Mammary epithelial cell (primary cell): ENCODE measurements at regions of chr5 and their contacts with region 1.

Region 1: GRCh38 chr5:170836226-170836625 is 25.6 kb upstream of the RANBP17 start:
- DNase-seq: no peak
- H3K4me3 ChIP-seq: no peak overlapping the region
- H3K27ac ChIP-seq: no peak overlapping the region
- H3K4me1 ChIP-seq: no peaks in the 10 kb centered on the region
- H3K27me3 ChIP-seq: no peaks in the 10 kb centered on the region
- CTCF ChIP-seq: no peak

Region 2: DNA sequence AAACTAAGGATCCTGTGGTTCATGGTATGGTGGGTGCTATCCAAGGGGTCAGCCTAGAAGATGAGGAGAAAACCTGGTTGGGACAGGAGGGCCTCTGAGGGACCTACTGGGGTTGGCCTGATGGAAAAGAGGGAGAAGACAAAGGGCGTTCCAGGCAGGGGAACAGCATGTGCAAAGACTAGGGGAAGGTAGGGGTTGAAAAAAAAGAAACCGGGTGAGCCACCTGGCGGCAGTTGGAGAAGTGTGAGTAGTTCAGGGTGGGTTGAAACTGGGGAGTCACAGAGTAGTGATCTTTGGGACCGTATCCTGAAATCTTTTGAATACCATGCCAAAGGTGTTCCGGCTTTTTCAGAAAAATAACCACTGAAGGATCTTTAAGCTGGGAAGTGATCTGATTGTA is 61.4 kb before region 1 on chr5:
- CTCF ChIA-PET with region 1: no interaction called
- dilution Hi-C with region 1: loop called (anchors 5 kb)
- in situ Hi-C with region 1: no loop called
- intact Hi-C with region 1: no loop called
- DNase-seq: no peak
- H3K4me3 ChIP-seq: no peak overlapping the region
- H3K27ac ChIP-seq: no peak overlapping the region
- H3K4me1 ChIP-seq: no peaks in the 10 kb centered on the region
- H3K27me3 ChIP-seq: no peaks in the 10 kb centered on the region
- CTCF ChIP-seq: no peak

Region 3: DNA sequence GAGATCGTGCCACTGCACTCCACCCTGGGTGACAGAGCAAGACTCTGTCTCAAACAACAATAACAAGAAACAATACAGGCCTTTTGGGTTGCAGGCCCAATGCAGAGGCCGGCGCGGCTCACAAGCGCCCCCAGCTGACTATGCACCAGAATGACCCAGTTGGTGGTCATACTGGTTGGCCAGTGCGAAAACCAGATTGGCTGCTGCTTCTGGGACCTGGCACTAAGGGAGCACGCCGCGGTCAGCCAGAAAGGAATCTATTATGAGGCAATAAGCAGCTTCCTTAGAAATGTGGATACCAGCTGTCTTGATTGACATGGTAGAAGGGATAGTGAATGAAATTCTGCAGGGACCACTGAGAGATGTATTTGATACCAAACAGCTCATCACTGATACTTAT is 60.6 kb after region 1 on chr5:
- CTCF ChIA-PET with region 1: no interaction called
- dilution Hi-C with region 1: no loop called
- in situ Hi-C with region 1: no loop called
- intact Hi-C with region 1: no loop called
- DNase-seq: no peak
- H3K4me3 ChIP-seq: no peak overlapping the region
- H3K27ac ChIP-seq: no peak overlapping the region
- H3K4me1 ChIP-seq: no peaks in the 10 kb centered on the region
- H3K27me3 ChIP-seq: no peaks in the 10 kb centered on the region
- CTCF ChIP-seq: no peak

Region 4: GRCh38 chr5:170907758-170908157 is 71.5 kb after region 1 on chr5:
- CTCF ChIA-PET with region 1: no interaction called
- dilution Hi-C with region 1: no loop called
- in situ Hi-C with region 1: no loop called
- intact Hi-C with region 1: no loop called
- DNase-seq: peak; percentile 59
- H3K4me3 ChIP-seq: no peak overlapping the region
- H3K27ac ChIP-seq: no peak overlapping the region
- H3K4me1 ChIP-seq: no peaks in the 10 kb centered on the region
- H3K27me3 ChIP-seq: no peaks in the 10 kb centered on the region
- CTCF ChIP-seq: no peak

Region 5: GRCh38 chr5:171776770-171777759 is 940.8 kb after region 1 on chr5:
- CTCF ChIA-PET with region 1: no interaction called
- dilution Hi-C with region 1: no loop called
- in situ Hi-C with region 1: no loop called
- intact Hi-C with region 1: no loop called
- DNase-seq: peak; percentile 39
- H3K4me3 ChIP-seq: no peak overlapping the region
- H3K27ac ChIP-seq: no peak overlapping the region
- H3K4me1 ChIP-seq: peaks cover 4% of the 10 kb centered on the region
- H3K27me3 ChIP-seq: no peaks in the 10 kb centered on the region
- CTCF ChIP-seq: no peak